Calu3 (cell line): ENCODE measurements at regions of chr7 and their contacts with region 1.

Region 1: DNA sequence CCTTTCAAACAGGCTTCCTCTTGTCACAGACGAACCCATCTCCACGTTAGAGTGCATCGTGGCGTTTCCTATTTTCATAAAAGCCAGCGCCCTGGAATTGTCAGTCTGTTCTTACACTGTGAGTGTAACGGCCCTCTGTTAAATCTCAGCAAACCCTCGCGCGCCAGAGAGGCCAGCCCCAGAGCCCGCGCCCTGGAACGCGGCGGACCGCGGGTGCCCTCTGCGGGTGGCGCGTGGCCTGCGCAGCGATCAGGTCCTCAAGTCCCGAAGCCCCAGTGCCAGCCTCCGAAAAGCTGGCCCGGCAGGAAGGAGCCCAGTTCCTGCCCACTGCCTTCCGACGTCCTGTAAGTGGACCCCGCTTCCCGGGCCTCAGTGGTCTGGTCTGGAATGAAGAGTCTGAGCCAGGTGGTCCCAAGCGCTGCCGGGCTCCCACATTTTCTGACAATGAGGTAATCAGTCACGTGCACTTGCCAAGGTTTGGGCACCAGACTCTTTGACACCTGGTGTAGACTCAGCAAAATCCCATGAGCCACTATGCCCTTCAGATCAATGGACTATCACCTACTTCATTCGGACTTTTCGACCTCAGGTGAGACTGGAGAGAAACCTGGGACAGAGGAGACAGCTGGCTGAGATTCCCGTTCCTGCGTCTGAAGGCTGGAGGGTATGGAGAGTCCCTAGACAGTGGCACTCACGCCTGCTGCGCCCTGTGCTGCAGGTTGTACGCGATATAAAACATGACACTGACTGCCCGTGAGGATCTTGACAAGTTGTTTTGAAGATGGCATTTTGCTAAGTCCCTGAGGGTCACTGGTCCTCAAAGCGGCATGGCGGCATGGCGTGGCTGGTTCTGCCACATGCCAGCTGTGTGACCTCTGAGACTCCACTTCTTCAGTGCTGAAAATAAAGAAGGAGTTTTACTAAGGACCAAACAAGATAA is 109.4 kb upstream of the LANCL2 start:
- DNase-seq: peak; percentile 96
- H3K4me3 Mint-ChIP-seq: peak overlapping the region; percentile 88
- H3K27ac Mint-ChIP-seq: peak overlapping the region; percentile 50
- H3K4me1 Mint-ChIP-seq: peaks cover 22% of the 10 kb centered on the region
- H3K27me3 Mint-ChIP-seq: peaks cover 48% of the 10 kb centered on the region
- CTCF ChIP-seq: peak; percentile 94

Region 2: DNA sequence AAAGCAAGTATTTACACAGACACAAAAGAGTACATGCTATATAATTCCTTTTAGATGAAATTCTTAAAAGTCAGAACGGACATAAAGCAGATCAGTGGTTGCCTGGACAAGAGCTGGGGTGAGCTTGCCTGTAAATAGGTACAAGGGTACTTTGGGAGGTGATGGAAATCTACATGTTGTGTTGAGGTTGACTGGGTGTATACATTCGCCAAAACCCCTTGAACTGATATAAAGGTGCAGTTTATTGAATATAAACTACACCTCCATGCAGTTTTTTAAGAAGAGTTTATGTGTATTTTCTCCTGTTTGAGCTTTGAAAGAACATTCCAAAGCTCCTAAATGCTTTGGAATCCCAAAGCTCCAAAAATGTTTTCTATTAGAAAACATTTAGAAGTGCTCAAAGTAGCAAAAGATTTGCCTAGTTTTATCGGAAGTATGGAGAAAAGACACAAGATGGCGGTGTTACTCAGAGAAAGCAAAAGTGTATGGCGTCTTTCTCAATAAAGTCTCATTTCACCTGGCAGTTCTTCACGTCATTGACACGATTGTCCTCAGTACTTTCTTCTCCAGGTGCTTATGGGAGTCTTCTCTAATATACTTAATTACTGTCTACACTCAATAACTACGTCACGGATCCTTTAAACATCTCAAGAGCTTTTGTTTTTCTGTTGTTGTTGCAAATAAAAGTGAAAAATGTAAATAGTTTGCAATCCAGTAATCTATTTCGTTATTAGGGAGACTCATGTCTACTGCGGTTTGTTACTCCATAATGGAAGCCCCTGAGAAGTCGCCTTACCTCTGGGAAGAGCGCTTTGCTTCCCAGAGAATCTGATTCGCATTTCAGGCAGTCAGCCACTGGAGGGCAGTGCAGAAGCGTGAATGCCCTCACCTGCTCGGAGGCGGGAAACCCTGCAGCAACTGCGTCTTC is 482.0 kb before region 1 on chr7:
- CTCF ChIA-PET with region 1: interaction called, 11 read pairs
- intact Hi-C with region 1: loop called (anchors 1 kb)
- DNase-seq: peak; percentile 95
- H3K4me3 Mint-ChIP-seq: peak overlapping the region; percentile 67
- H3K27ac Mint-ChIP-seq: peak overlapping the region; percentile 69
- H3K4me1 Mint-ChIP-seq: peaks cover 21% of the 10 kb centered on the region
- H3K27me3 Mint-ChIP-seq: no peaks in the 10 kb centered on the region
- CTCF ChIP-seq: peak; percentile 97

Region 3: DNA sequence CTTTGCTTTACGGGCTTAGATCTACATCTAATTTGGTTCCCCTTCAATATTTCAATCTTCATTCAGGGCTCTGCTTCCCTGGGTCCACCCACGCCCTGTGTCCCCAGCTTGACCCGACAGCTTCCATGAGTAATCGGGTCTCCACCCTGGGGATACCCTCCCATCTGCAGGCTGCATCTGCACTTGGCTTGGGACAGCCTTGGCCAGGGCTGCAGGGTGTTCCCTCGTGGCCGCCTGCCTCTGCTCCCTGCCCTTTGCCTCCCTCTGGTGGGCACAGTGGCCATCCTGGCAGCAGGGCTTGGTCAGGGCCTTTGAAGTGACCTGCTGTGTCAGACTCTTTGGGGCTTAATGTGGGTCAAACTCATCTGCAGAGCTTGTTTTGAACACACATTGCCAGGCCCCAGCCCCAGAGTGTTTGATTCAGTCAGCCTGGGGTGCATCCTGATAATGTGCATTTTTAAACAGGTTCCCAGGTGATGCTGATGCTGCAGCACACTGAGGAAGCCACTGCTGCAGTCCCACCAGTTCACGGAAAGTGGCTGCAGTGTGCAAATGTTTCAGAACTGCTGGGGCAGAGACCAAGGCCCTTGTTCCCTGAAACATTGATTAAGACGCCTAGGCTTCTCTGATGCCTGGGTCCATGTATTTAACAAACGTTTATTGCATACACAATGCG is 416.1 kb before region 1 on chr7:
- CTCF ChIA-PET with region 1: interaction called, 16 read pairs
- intact Hi-C with region 1: loop called (anchors 2 kb)
- DNase-seq: peak; percentile 95
- H3K4me3 Mint-ChIP-seq: peak overlapping the region; percentile 13
- H3K27ac Mint-ChIP-seq: peak overlapping the region; percentile 27
- H3K4me1 Mint-ChIP-seq: peaks cover 31% of the 10 kb centered on the region
- H3K27me3 Mint-ChIP-seq: no peaks in the 10 kb centered on the region
- CTCF ChIP-seq: peak; percentile 96

Region 4: DNA sequence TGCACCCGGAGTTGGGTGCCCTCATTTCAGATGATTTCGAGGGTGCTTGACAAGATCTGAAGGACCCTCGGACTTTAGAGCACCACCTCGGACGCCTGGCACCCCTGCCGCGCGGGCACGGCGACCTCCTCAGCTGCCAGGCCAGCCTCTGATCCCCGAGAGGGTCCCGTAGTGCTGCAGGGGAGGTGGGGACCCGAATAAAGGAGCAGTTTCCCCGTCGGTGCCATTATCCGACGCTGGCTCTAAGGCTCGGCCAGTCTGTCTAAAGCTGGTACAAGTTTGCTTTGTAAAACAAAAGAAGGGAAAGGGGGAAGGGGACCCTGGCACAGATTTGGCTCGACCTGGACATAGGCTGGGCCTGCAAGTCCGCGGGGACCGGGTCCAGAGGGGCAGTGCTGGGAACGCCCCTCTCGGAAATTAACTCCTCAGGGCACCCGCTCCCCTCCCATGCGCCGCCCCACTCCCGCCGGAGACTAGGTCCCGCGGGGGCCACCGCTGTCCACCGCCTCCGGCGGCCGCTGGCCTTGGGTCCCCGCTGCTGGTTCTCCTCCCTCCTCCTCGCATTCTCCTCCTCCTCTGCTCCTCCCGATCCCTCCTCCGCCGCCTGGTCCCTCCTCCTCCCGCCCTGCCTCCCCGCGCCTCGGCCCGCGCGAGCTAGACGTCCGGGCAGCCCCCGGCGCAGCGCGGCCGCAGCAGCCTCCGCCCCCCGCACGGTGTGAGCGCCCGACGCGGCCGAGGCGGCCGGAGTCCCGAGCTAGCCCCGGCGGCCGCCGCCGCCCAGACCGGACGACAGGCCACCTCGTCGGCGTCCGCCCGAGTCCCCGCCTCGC is 237.2 kb before region 1 on chr7 and contains the start of gene EGFR:
- CTCF ChIA-PET with region 1: interaction called, 3 read pairs
- intact Hi-C with region 1: loop called (anchors 10 kb)
- DNase-seq: peak; percentile 90
- H3K4me3 Mint-ChIP-seq: peak within 1 kb of the TSS; percentile 84
- H3K27ac Mint-ChIP-seq: peak within 1 kb of the TSS; percentile 84
- H3K4me1 Mint-ChIP-seq: peaks cover 37% of the 10 kb centered on the region
- H3K27me3 Mint-ChIP-seq: no peaks in the 10 kb centered on the region
- CTCF ChIP-seq: no peak
- total RNA-seq, gene EGFR: 85.3 and 87.4 TPM in 2 replicates

Region 5: DNA sequence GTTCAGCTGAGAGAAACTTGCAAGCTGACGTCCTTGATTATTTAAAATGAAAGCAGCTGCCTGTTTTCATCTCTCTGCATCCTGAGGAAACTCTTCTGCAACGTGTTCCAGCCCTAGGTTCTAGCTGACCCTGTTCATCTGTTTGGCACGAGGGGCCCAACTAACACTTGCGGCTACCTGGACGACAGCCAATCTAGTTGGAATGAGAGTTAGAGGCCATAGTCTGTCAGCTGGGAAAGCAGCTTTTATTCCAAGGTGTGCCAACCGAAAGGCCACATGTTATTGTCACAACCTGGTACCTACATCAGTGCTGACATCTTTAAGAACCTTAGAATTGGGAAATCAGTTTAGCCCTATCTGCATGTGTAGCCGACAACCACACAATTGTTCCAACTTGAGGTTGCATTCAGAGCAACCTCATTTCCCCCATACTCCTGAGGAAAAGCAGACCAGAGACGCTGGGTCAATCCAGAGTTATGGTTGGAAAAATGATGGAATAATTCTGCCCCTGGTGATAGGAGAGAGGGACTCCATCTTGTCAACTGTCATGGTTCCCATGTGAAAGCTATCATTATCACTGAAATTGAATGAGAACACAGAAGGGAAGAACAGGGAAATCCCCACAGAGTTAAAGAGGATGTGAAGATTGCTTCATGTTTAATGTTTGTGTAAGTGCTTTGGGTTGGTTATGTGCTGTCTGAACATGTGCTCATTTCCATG is 115.4 kb before region 1 on chr7:
- CTCF ChIA-PET with region 1: no interaction called
- intact Hi-C with region 1: loop called (anchors 5 kb)
- DNase-seq: no peak
- H3K4me3 Mint-ChIP-seq: no peak overlapping the region
- H3K27ac Mint-ChIP-seq: no peak overlapping the region
- H3K4me1 Mint-ChIP-seq: peaks cover 61% of the 10 kb centered on the region
- H3K27me3 Mint-ChIP-seq: no peaks in the 10 kb centered on the region
- CTCF ChIP-seq: no peak